Activated CD4-positive, alpha-beta memory T cell treated with anti-CD3 and anti-CD28 coated beads, Interleukin-2, amount 10 ng/mL, durations not matched to agents 7 days and 5 days (primary cell): ENCODE measurements at regions of chr15 and their contacts with region 1.

Region 1: GRCh38 chr15:42495361-42496212 is at the start of gene SNAP23:
- DNase-seq: peak; percentile 87
- H3K4me3 Mint-ChIP-seq: peak within 1 kb of the TSS; percentile 98
- H3K27ac Mint-ChIP-seq: peak within 1 kb of the TSS; percentile 84
- H3K4me1 Mint-ChIP-seq: peaks cover 64% of the 10 kb centered on the region
- H3K27me3 Mint-ChIP-seq: no peaks in the 10 kb centered on the region
- total RNA-seq, gene SNAP23: 46.0 to 49.1 TPM

Region 2: DNA sequence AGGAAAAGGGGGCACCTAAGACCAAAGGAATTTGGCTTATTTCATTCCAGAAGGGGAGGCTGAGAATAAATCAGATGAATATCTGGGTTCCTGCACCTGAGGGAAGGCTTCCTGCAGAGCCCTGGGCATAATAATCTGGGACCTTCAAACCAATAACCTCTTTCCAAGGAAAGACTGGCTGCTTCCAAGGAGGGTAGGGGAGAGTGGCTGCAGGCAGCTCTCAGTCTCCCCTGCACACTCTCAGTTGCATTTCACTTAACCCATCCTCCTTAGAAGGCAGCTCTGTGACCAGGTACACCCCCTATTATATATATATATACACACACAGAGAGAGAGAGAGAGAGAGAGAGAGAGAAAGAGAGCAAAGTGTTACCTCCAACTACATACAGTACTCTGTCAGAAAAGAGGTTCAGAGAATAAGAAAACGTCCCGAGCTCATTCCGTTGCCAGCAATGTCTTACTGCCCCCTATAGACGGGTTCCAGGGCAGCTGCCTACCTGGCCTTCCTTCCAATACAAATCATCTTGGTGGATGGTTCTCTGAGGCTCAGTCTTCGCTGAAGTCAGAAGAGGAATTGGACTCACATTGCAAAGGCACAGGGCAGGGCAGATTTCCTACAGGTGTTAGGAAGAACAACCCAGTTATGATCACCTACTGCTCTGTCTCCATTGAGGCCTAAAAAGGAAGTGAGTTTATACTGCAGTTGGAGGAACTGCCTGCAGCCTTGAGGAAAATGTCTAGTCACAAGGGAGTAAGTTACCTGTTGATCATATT is 110.2 kb before region 1 on chr15:
- CTCF ChIA-PET with region 1: no interaction called
- POLR2A ChIA-PET with region 1: no interaction called
- DNase-seq: peak; percentile 51
- H3K4me3 Mint-ChIP-seq: no peak overlapping the region
- H3K27ac Mint-ChIP-seq: no peak overlapping the region
- H3K4me1 Mint-ChIP-seq: no peaks in the 10 kb centered on the region
- H3K27me3 Mint-ChIP-seq: no peaks in the 10 kb centered on the region

Region 3: DNA sequence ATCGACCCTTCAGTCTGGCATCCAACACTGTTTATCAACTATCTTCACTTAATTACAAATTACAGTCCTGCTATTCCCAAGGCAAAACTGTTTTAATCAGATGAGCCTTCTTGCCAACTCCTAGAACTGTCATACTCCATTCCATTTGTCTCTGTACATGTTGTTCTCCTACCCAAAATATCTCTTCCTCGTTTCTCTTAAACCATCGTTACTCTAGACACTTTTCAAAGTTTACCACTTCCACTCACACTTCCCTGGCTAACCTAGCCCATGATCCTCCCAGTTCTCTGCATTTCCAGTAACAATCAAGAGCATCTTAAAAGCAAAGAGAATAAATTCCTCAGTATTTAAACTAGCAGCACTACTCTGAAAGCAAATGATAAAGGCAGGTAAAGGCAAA is 24.6 kb before region 1 on chr15:
- CTCF ChIA-PET with region 1: interaction called, 11 read pairs
- POLR2A ChIA-PET with region 1: interaction called, 3 read pairs
- DNase-seq: no peak
- H3K4me3 Mint-ChIP-seq: no peak overlapping the region
- H3K27ac Mint-ChIP-seq: no peak overlapping the region
- H3K4me1 Mint-ChIP-seq: peaks cover 2% of the 10 kb centered on the region
- H3K27me3 Mint-ChIP-seq: no peaks in the 10 kb centered on the region

Region 4: GRCh38 chr15:42575188-42576039 is 79.8 kb after region 1 on chr15 and contains the start of gene STARD9:
- CTCF ChIA-PET with region 1: no interaction called
- POLR2A ChIA-PET with region 1: interaction called, 13 read pairs
- DNase-seq: peak; percentile 96
- H3K4me3 Mint-ChIP-seq: peak within 1 kb of the TSS; percentile 90
- H3K27ac Mint-ChIP-seq: peak within 1 kb of the TSS; percentile 69
- H3K4me1 Mint-ChIP-seq: peaks cover 29% of the 10 kb centered on the region
- H3K27me3 Mint-ChIP-seq: peaks cover 24% of the 10 kb centered on the region
- total RNA-seq, gene STARD9: 8.2 TPM

Region 5: GRCh38 chr15:42581272-42581730 is 85.7 kb after region 1 on chr15:
- CTCF ChIA-PET with region 1: interaction called, 3 read pairs
- POLR2A ChIA-PET with region 1: interaction called, 13 read pairs
- DNase-seq: peak; percentile 86
- H3K4me3 Mint-ChIP-seq: peak overlapping the region; percentile 76
- H3K27ac Mint-ChIP-seq: peak overlapping the region; percentile 52
- H3K4me1 Mint-ChIP-seq: peaks cover 38% of the 10 kb centered on the region
- H3K27me3 Mint-ChIP-seq: peaks cover 26% of the 10 kb centered on the region

Region 6: DNA sequence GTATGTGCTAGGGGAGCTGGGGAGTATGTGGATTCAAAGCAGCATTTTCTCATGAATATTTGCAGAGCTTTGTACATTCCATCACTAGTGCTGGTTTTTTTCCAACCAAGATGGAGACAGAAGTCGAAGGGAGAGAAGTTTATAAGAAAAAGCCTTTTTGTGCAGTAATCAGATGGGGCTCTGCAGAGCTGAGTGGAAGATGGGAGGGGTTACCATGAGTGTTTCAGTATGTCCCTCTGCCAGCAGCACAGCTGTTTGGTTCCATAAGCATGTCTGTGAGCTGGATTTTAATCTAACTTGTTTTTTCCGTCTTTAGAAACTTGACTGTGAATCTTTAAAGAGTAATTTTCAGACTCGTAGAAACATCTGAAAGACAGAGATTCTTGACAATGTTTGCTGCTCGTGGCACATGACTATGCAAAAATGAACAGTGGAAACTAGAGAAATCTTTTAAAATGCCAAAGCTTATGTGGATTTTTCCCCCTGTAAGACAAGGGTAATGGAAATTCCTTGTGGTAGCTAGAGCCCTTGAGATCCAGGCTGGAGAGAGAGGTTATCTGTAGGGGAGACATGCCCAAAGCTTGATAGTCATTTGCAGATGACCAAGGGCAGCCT is 100.1 kb after region 1 on chr15:
- CTCF ChIA-PET with region 1: no interaction called
- POLR2A ChIA-PET with region 1: no interaction called
- DNase-seq: no peak
- H3K4me3 Mint-ChIP-seq: no peak overlapping the region
- H3K27ac Mint-ChIP-seq: no peak overlapping the region
- H3K4me1 Mint-ChIP-seq: no peaks in the 10 kb centered on the region
- H3K27me3 Mint-ChIP-seq: no peaks in the 10 kb centered on the region